ENCODE measurements at regions of chr13 and their contacts with region 1.

Region 1: DNA sequence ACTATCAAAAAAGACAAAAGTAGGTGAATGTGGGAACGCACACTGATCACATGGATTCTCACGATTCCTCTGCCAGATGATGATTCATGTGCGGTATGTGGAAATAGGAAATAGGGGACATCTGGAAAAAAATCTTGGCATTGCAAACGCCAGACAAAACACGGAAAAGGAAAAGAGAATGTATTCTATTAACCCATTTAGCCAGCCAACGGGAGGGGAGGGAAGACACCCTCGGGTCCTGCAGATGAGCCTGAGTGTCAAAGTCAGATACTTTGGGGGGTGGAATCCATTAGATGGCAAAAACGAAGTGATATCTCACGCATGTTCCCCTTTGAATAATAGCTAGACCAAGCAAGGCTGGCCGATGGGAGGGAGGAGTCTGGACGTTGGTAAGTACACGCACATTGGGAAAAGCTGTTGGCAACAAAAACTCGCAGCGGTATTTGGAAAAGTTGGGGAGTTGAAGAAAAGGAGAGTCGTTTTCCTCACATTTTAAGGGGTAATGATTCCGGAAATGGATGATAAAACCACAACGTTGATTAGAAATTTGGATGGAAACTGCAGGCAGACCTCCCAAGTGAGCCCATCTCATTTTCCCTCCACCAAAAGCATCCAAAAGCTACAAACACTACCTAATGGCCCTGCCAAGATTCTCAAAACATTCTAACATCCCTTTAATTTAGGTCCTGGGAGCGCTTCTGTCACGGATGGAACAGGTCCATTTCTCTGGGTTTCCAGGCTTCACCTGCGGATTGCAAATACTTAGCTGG is 73.6 kb downstream of the COL4A1 start:
- ATAC-seq: peak in 3 of 8 experiments; percentile 36 to 81 (median 74)
- H3K4me3 ChIP-seq: no peak overlapping the region
- H3K27ac ChIP-seq: no peak overlapping the region
- H3K4me1 ChIP-seq: peaks cover 0 to 6% of the 10 kb centered on the region in 2 donors

Region 2: GRCh38 chr13:110070511-110071120 is 162.8 kb before region 1 on chr13:
- in situ Hi-C with region 1: no loop called
- ATAC-seq: peak in 4 of 8 experiments; percentile 29 to 47 (median 36)
- H3K4me3 ChIP-seq: no peak overlapping the region
- H3K27ac ChIP-seq: no peak overlapping the region
- H3K4me1 ChIP-seq: peaks cover 0 to 9% of the 10 kb centered on the region in 2 donors

Region 3: DNA sequence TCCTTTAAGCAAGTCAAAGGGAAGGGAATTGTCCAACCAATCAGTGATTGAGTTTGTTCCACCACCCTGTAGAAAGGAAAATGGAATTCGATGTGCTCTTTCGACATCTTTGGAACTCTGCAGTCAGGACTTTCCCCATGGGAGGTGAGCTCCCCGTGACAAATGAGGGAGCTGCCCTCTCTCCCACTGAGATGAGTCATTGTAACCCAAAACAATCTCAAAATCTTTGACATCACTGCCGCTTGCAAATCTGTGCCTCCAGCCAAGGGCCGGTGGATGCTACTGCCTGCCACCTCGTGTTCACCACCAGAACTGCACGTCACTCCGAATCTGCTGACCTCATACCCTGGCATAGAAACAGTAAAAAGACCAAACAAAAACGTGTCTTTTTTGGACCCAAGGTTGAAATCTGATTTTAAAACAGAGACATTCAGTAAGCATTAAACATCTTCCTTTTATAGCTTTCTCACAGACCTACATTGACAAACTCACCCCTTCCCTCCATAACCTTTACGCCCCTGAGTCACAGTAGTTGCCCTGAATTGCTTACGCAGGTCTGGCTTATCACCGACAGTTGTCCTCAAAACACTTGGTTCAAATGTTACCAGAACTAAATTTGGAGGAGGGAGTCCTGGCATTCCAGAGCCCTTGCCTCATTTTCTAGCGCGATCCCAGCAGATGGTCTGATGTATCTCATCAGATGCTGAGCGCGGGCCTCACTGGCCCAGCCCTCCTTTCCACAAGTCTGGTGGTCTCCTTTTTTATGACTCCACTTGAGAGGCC is 179.0 kb after region 1 on chr13:
- in situ Hi-C with region 1: loop called in 5 of 9 experiments (anchors 25 kb)
- ATAC-seq: peak; percentile 87 to 97 (median 92)
- H3K4me3 ChIP-seq: no peak overlapping the region
- H3K27ac ChIP-seq: no peak overlapping the region
- H3K4me1 ChIP-seq: peaks cover 5 to 6% of the 10 kb centered on the region in 2 donors